ENCODE measurements at regions of chr6 and their contacts with region 1.

Region 1: DNA sequence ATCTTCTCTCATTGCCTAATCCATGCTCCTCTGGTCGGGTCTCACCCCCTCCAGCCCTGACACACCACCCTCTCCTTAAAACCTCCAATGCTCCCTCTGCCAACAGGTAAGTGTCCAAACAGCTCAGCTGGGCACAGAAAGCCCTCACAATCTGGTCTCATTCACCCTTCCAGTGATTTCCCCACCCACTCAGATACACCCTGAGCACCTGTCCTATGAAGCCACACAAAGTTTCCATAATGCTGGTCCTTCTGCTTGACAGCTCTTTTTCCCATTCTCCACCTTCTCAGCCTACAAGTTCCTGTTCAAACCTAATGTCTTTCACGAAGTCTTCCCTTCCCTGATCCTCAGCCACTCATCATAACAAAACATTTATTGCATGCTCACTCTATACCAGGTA is 70.1 kb upstream of the MRPS10 start:
- DNase-seq: no peak
- ATAC-seq: no peak
- H3K4me3 ChIP-seq: no peak overlapping the region
- H3K27ac ChIP-seq: no peak overlapping the region
- H3K4me1 ChIP-seq: peaks cover 12% of the 10 kb centered on the region
- H3K27me3 ChIP-seq: no peaks in the 10 kb centered on the region
- CTCF ChIP-seq: no peak

Region 2: DNA sequence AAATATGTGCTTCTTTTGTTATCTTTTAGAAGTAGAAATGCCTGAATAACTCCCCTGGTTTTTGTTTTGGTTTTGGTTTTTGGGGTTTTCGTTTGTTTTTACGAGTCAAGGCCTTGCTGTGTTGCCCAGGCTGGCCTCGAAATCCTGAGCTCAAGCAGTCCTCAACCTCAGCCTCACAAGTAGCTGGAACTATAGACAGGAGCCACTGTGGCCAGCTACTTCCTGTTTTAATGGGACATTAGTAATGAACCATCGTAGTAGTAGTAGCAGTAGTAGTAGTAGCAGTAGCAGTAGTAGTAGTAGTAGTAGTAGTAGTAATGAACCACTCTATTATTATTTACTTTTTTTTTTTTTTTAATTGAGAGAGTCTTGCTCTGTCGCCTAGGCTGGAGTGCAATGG is 342.1 kb after region 1 on chr6:
- CTCF ChIA-PET with region 1: no interaction called
- POLR2A ChIA-PET with region 1: no interaction called
- in situ Hi-C with region 1: no loop called
- intact Hi-C with region 1: loop called (anchors 5 kb)
- DNase-seq: no peak
- ATAC-seq: no peak
- H3K4me3 ChIP-seq: no peak overlapping the region
- H3K27ac ChIP-seq: no peak overlapping the region
- H3K4me1 ChIP-seq: no peaks in the 10 kb centered on the region
- H3K27me3 ChIP-seq: no peaks in the 10 kb centered on the region
- CTCF ChIP-seq: no peak

Measured in Panc1 (cell line).